CD4-positive, alpha-beta memory T cell (primary cell): ENCODE measurements at regions of chr1 and their contacts with region 1.

Region 1: GRCh38 chr1:152001391-152002249 is 8.0 kb upstream of the S100A10 start:
- DNase-seq: peak; percentile 66 to 79 (median 70)
- H3K4me3 ChIP-seq: no peak overlapping the region
- H3K4me3 Mint-ChIP-seq: no peak overlapping the region
- H3K27ac ChIP-seq: no peak overlapping the region
- H3K27ac Mint-ChIP-seq: peak overlapping the region in 3 of 7 donors; percentile 36 to 60 (median 51)
- H3K4me1 ChIP-seq: no peaks in the 10 kb centered on the region
- H3K4me1 Mint-ChIP-seq: peaks cover 0 to 3% (median under 1%) of the 10 kb centered on the region in 4 donors
- H3K27me3 ChIP-seq: no peaks in the 10 kb centered on the region
- H3K27me3 Mint-ChIP-seq: no peaks in the 10 kb centered on the region

Region 2: DNA sequence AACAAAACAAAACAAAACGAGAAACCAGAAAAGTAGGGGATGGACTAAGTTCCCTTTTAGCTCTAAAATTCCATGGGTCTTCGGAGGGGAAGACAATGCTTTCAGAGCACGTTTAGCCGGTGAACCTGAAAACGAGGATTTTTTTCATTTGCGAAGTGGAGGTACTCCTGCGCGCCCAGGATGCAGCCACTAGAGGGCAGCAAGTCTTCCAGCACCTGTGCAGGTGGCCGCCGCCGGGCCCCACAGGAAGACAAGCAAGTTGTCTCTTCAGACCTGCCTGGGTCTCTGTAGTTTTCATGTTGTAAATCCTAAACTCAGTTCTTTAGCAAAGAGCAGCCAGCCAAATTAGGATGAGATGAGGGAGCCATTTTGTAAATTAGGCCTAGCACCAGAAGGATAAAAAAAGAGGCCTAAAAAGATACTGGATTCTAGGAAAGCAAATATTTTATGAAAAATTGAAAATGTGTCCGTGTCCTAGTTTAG is 407.4 kb before region 1 on chr1:
- CTCF ChIA-PET with region 1: interaction called, 14 read pairs
- POLR2A ChIA-PET with region 1: no interaction called
- intact Hi-C with region 1: loop called (anchors 1 kb)
- DNase-seq: peak; percentile 82 to 84 (median 83)
- H3K4me3 ChIP-seq: peak overlapping the region in 1 of 2 donors; percentile 33
- H3K4me3 Mint-ChIP-seq: peak overlapping the region in 7 of 8 donors; percentile 33 to 82 (median 70)
- H3K27ac ChIP-seq: no peak overlapping the region
- H3K27ac Mint-ChIP-seq: peak overlapping the region in 6 of 7 donors; percentile 4 to 49 (median 26)
- H3K4me1 ChIP-seq: peaks cover 5% of the 10 kb centered on the region
- H3K4me1 Mint-ChIP-seq: peaks cover 3 to 12% (median 9%) of the 10 kb centered on the region in 4 donors
- H3K27me3 ChIP-seq: no peaks in the 10 kb centered on the region
- H3K27me3 Mint-ChIP-seq: peaks cover 4 to 8% of the 10 kb centered on the region in 2 donors

Region 3: DNA sequence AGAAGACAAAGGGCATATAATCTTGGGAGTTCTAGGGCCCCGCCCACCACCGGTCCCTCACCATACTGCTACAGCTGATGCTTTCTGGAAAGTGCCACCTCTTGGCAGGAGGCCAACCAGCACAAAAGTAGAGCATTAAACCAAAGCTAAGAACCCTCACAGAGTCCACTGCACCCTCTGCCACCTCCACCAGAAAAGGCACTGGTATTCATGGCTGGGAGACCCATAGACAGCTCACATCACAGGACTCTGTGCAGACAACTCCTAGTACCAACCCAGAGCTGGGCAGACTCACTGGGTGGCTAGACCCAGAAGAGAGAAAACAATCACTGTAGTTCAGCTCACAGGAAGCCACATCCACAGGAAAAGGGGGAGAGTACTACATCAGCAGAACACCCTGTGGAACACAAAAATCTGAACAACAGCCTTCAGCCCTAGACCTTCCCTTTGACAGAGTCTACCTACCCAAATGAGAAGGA is 103.1 kb before region 1 on chr1:
- CTCF ChIA-PET with region 1: interaction called, 26 read pairs
- POLR2A ChIA-PET with region 1: interaction called, 5 read pairs
- intact Hi-C with region 1: no loop called
- DNase-seq: peak; percentile 82 to 86 (median 84)
- H3K4me3 ChIP-seq: peak overlapping the region; percentile 26 to 52
- H3K4me3 Mint-ChIP-seq: peak overlapping the region; percentile 73 to 89 (median 78)
- H3K27ac ChIP-seq: peak overlapping the region; percentile 54
- H3K27ac Mint-ChIP-seq: peak overlapping the region; percentile 90 to 97 (median 94)
- H3K4me1 ChIP-seq: peaks cover 91% of the 10 kb centered on the region
- H3K4me1 Mint-ChIP-seq: peaks cover 56 to 86% (median 68%) of the 10 kb centered on the region in 4 donors
- H3K27me3 ChIP-seq: no peaks in the 10 kb centered on the region
- H3K27me3 Mint-ChIP-seq: no peaks in the 10 kb centered on the region

Region 4: DNA sequence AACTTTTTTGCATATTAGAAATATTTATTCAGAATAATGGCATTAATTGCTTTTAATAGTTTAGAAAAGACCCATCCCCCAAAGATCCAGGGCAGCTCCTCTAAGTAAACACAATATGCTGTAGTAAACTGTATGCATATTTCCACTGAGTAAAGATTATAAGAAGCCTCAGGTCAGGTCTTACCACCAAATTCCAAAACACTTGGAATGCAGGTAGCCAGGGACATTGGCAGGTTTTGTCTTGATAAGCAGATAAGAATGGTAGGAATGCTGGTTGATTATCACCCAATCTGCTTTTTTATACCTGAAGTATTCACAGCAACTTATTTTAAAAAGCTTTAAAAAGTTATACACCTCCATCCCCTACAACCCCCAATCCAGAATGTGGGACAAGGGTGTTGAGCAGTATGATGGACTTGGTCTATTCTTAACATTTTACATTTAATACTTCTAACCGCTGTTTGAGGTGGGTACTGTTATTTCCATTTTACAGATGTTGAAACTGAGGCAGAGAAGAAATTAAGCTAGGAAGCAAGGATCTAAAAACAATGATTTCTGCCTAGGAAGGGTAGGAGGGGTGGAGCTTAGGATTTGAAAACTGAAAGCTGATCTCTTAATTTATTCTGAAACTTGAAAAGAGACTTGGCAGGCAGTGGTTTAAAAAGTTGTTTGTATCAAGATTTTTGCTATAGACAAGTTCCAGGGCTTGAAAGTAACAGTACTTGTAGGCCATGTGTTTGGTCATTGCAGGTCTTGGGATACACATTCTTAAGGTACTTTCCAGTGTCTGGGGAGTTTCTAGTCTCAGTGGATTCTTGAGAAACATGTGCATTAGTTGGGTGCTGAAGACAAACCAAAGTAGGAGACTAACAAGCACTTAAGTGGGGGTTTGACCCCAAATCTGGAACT is 76.7 kb before region 1 on chr1:
- CTCF ChIA-PET with region 1: interaction called, 340 read pairs
- POLR2A ChIA-PET with region 1: interaction called, 3 read pairs
- intact Hi-C with region 1: no loop called
- DNase-seq: peak in 1 of 5 donors; percentile 24
- H3K4me3 ChIP-seq: no peak overlapping the region
- H3K4me3 Mint-ChIP-seq: peak overlapping the region in 6 of 8 donors; percentile 3 to 55 (median 40)
- H3K27ac ChIP-seq: no peak overlapping the region
- H3K27ac Mint-ChIP-seq: peak overlapping the region; percentile 51 to 84 (median 68)
- H3K4me1 ChIP-seq: peaks cover 16% of the 10 kb centered on the region
- H3K4me1 Mint-ChIP-seq: peaks cover 9 to 11% (median 9%) of the 10 kb centered on the region in 4 donors
- H3K27me3 ChIP-seq: no peaks in the 10 kb centered on the region
- H3K27me3 Mint-ChIP-seq: no peaks in the 10 kb centered on the region

Region 5: GRCh38 chr1:151945725-151946364 is 55.8 kb before region 1 on chr1:
- CTCF ChIA-PET with region 1: interaction called, 340 read pairs
- POLR2A ChIA-PET with region 1: interaction called, 4 read pairs
- intact Hi-C with region 1: no loop called
- DNase-seq: peak; percentile 87 to 97 (median 93)
- H3K4me3 ChIP-seq: peak overlapping the region in 1 of 2 donors; percentile 25
- H3K4me3 Mint-ChIP-seq: peak overlapping the region; percentile 49 to 80 (median 67)
- H3K27ac ChIP-seq: peak overlapping the region; percentile 82
- H3K27ac Mint-ChIP-seq: peak overlapping the region; percentile 94 to 98 (median 96)
- H3K4me1 ChIP-seq: peaks cover 53% of the 10 kb centered on the region
- H3K4me1 Mint-ChIP-seq: peaks cover 44 to 48% (median 47%) of the 10 kb centered on the region in 4 donors
- H3K27me3 ChIP-seq: no peaks in the 10 kb centered on the region
- H3K27me3 Mint-ChIP-seq: no peaks in the 10 kb centered on the region

Region 6: GRCh38 chr1:151976858-151977257 is 24.8 kb before region 1 on chr1:
- CTCF ChIA-PET with region 1: interaction called, 270 read pairs
- POLR2A ChIA-PET with region 1: no interaction called
- intact Hi-C with region 1: no loop called
- DNase-seq: no peak
- H3K4me3 ChIP-seq: no peak overlapping the region
- H3K4me3 Mint-ChIP-seq: no peak overlapping the region
- H3K27ac ChIP-seq: no peak overlapping the region
- H3K27ac Mint-ChIP-seq: no peak overlapping the region
- H3K4me1 ChIP-seq: no peaks in the 10 kb centered on the region
- H3K4me1 Mint-ChIP-seq: peaks cover 10 to 16% (median 13%) of the 10 kb centered on the region in 4 donors
- H3K27me3 ChIP-seq: no peaks in the 10 kb centered on the region
- H3K27me3 Mint-ChIP-seq: peaks cover 0 to 1% of the 10 kb centered on the region in 2 donors

Region 7: DNA sequence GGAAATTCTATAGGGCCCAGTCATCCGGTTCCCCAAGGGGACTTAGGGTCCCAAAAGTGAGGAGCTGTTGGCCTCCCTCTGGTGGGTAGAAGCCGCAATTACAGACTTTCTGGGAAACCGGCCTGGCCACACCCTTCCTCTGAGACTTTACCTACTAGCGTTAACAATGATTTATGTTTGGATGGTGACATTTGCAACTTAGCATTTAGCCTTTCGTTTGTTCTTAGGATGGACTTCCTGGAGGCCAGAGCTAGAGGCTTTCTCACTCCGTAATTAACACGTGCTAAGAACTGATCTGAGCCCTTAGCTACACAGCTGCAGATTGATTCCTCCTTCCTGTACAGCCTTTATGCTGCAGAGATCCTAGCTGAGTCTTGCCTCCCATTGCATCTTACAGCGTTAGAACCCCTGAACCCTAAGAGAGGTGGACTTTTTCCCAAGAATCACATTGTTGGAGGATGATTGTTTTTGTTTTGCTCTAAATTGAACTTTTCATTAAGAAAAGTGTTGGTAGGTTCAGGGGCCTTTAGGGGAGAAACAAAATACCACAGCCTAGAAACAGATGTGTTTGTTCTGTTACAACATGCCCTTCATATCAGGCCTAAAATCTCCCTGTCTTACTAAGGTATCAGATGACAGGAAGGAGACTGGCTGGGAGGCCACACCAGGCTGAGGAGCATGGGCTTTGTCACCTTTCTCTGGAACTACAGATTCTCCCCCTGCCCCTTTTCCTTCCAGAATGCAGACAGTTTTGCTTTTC is 33.2 kb after region 1 on chr1:
- CTCF ChIA-PET with region 1: interaction called, 14 read pairs
- POLR2A ChIA-PET with region 1: interaction called, 4 read pairs
- intact Hi-C with region 1: no loop called
- DNase-seq: peak; percentile 75 to 87 (median 80)
- H3K4me3 ChIP-seq: peak overlapping the region; percentile 73 to 77
- H3K4me3 Mint-ChIP-seq: peak overlapping the region; percentile 91 to 100 (median 100)
- H3K27ac ChIP-seq: peak overlapping the region; percentile 88
- H3K27ac Mint-ChIP-seq: peak overlapping the region; percentile 97 to 100 (median 99)
- H3K4me1 ChIP-seq: peaks cover 38% of the 10 kb centered on the region
- H3K4me1 Mint-ChIP-seq: peaks cover 23 to 54% (median 43%) of the 10 kb centered on the region in 4 donors
- H3K27me3 ChIP-seq: no peaks in the 10 kb centered on the region
- H3K27me3 Mint-ChIP-seq: no peaks in the 10 kb centered on the region

Region 8: GRCh38 chr1:152127670-152128069 is 126.0 kb after region 1 on chr1:
- CTCF ChIA-PET with region 1: no interaction called
- POLR2A ChIA-PET with region 1: no interaction called
- intact Hi-C with region 1: no loop called
- DNase-seq: no peak
- H3K4me3 ChIP-seq: no peak overlapping the region
- H3K4me3 Mint-ChIP-seq: no peak overlapping the region
- H3K27ac ChIP-seq: no peak overlapping the region
- H3K27ac Mint-ChIP-seq: no peak overlapping the region
- H3K4me1 ChIP-seq: no peaks in the 10 kb centered on the region
- H3K4me1 Mint-ChIP-seq: no peaks in the 10 kb centered on the region
- H3K27me3 ChIP-seq: peaks cover 20% of the 10 kb centered on the region
- H3K27me3 Mint-ChIP-seq: peaks cover 44 to 55% of the 10 kb centered on the region in 2 donors

Region 9: DNA sequence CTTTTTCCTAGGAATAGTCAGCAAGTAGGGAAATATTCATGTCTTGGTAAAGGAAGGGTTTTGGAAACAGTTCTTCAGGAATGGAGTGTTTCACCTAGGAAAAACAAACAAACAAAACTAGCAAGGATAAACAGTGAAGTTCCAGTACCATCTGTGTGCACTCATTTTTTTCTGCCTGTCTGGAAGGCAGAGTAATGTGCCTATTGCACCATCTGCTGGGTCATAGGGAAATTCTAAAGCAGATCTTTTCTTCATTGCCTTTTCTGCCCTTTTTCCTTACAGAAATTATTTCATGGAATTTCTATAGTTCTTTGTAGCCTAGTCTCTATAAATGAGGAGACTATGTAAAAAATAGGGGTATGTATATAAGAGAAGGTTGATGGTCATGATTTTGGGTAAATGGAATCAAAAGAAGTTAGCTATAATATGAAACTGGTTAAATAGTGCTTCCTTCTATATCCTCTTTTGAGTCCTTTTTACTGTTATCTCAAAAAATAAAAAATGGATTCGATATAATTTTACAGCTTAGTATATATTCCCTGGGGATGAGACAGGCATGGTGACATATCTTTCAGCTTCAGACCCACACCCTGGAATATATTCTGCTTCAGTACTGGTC is 225.8 kb after region 1 on chr1:
- CTCF ChIA-PET with region 1: no interaction called
- POLR2A ChIA-PET with region 1: no interaction called
- intact Hi-C with region 1: no loop called
- DNase-seq: no peak
- H3K4me3 ChIP-seq: no peak overlapping the region
- H3K4me3 Mint-ChIP-seq: no peak overlapping the region
- H3K27ac ChIP-seq: no peak overlapping the region
- H3K27ac Mint-ChIP-seq: no peak overlapping the region
- H3K4me1 ChIP-seq: no peaks in the 10 kb centered on the region
- H3K4me1 Mint-ChIP-seq: no peaks in the 10 kb centered on the region
- H3K27me3 ChIP-seq: no peaks in the 10 kb centered on the region
- H3K27me3 Mint-ChIP-seq: peaks cover 11 to 13% of the 10 kb centered on the region in 2 donors